CD14-positive monocyte (primary cell): ENCODE measurements at regions of chr21 and their contacts with region 1.

Region 1: GRCh38 chr21:33641336-33642026 is at the start of gene CRYZL1:
- DNase-seq: peak; percentile 99 to 100 (median 100)
- H3K4me3 ChIP-seq: peak within 1 kb of the TSS; percentile 79 to 87 (median 81)
- H3K4me3 Mint-ChIP-seq: peak within 1 kb of the TSS; percentile 94 to 100
- H3K27ac ChIP-seq: peak within 1 kb of the TSS; percentile 70 to 93
- H3K27ac Mint-ChIP-seq: peak within 1 kb of the TSS; percentile 91 to 99 (median 98)
- H3K4me1 ChIP-seq: peaks cover 34 to 45% of the 10 kb centered on the region in 2 donors
- H3K4me1 Mint-ChIP-seq: peaks cover 40% of the 10 kb centered on the region
- H3K27me3 ChIP-seq: peaks cover 0 to 2% of the 10 kb centered on the region in 2 donors
- H3K27me3 Mint-ChIP-seq: peaks cover 0 to 10% (median 0%) of the 10 kb centered on the region in 3 donors
- CTCF ChIP-seq: no peak
- polyA plus RNA-seq, gene CRYZL1: 25.9 to 30.6 (median 26.1) TPM

Region 2: GRCh38 chr21:32278518-32279376 is 1362.7 kb before region 1 on chr21 and contains the start of gene MIS18A:
- intact Hi-C with region 1: loop called in 1 of 2 experiments (anchors 10 kb)
- DNase-seq: peak; percentile 94 to 99 (median 98)
- H3K4me3 ChIP-seq: peak within 1 kb of the TSS; percentile 74 to 94 (median 82)
- H3K4me3 Mint-ChIP-seq: peak within 1 kb of the TSS; percentile 98 to 99
- H3K27ac ChIP-seq: peak within 1 kb of the TSS; percentile 29 to 85
- H3K27ac Mint-ChIP-seq: peak within 1 kb of the TSS; percentile 85 to 95 (median 94)
- H3K4me1 ChIP-seq: peaks cover 16 to 21% of the 10 kb centered on the region in 2 donors
- H3K4me1 Mint-ChIP-seq: peaks cover 23% of the 10 kb centered on the region
- H3K27me3 ChIP-seq: no peaks in the 10 kb centered on the region
- H3K27me3 Mint-ChIP-seq: peaks cover 0 to 1% (median 0%) of the 10 kb centered on the region in 3 donors
- CTCF ChIP-seq: no peak
- polyA plus RNA-seq, gene MIS18A: 1.6 to 2.5 (median 2.3) TPM

Region 3: GRCh38 chr21:32392880-32393676 is 1248.4 kb before region 1 on chr21 and contains the start of gene URB1:
- intact Hi-C with region 1: loop called in 1 of 2 experiments (anchors 5 kb)
- DNase-seq: peak; percentile 85 to 87 (median 86)
- H3K4me3 ChIP-seq: peak within 1 kb of the TSS; percentile 58 to 97 (median 83)
- H3K4me3 Mint-ChIP-seq: peak within 1 kb of the TSS; percentile 90 to 91
- H3K27ac ChIP-seq: peak within 1 kb of the TSS; percentile 85 to 91
- H3K27ac Mint-ChIP-seq: peak within 1 kb of the TSS; percentile 85 to 95 (median 95)
- H3K4me1 ChIP-seq: peaks cover 17 to 21% of the 10 kb centered on the region in 2 donors
- H3K4me1 Mint-ChIP-seq: peaks cover 25% of the 10 kb centered on the region
- H3K27me3 ChIP-seq: no peaks in the 10 kb centered on the region
- H3K27me3 Mint-ChIP-seq: peaks cover 0 to 6% (median 4%) of the 10 kb centered on the region in 3 donors
- CTCF ChIP-seq: no peak
- polyA plus RNA-seq, gene URB1: 0.25 to 2.4 (median 0.47) TPM

Region 4: DNA sequence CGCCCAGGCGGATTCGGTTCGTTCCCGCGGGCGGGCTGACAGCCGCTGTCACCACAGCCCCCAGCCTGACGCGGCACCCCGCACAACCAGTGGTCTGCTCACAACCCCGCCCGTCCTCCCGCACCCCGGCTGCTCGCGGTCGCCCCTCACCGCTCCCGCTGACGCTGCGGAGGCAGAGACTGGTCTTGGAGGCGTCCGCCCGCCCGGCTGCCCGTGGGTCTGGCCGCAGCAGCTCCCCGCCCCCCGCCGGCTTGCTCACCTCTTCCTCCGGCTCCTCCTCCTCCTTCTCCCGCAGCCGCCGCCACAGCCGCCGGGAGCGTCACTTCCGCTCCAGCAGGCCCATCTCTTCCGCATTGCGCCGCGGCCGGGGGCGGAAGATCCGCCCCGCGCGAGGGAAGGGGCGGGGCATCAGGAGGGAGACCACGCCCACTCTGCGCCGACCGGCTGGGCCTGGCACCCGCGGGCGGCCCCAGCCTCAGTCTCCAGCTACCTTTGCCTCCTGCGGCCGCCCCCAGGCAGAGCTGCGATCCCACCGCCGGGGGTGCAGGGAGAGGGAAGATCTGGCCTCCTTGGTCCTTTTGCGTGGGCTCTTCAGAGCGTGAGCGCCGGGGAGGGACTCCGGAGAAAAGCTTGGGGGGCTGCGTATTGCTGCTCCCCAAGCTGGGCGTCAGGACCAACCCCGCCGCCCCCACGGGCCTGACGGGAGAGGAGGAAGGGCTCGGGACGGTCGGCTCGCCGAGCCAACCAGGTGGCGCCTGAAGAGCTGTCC is 913.6 kb before region 1 on chr21 and contains the start of gene SYNJ1:
- intact Hi-C with region 1: loop called in 1 of 2 experiments (anchors 5 kb)
- DNase-seq: peak; percentile 91 to 97 (median 95)
- H3K4me3 ChIP-seq: peak within 1 kb of the TSS; percentile 88 to 99 (median 97)
- H3K4me3 Mint-ChIP-seq: peak within 1 kb of the TSS; percentile 99
- H3K27ac ChIP-seq: peak within 1 kb of the TSS; percentile 92 to 98
- H3K27ac Mint-ChIP-seq: peak within 1 kb of the TSS; percentile 94 to 99 (median 98)
- H3K4me1 ChIP-seq: peaks cover 25 to 27% of the 10 kb centered on the region in 2 donors
- H3K4me1 Mint-ChIP-seq: peaks cover 40% of the 10 kb centered on the region
- H3K27me3 ChIP-seq: no peaks in the 10 kb centered on the region
- H3K27me3 Mint-ChIP-seq: peaks cover 0 to 2% (median 0%) of the 10 kb centered on the region in 3 donors
- CTCF ChIP-seq: no peak
- polyA plus RNA-seq, gene SYNJ1: 4.0 to 16.5 (median 8.1) TPM

Region 5: DNA sequence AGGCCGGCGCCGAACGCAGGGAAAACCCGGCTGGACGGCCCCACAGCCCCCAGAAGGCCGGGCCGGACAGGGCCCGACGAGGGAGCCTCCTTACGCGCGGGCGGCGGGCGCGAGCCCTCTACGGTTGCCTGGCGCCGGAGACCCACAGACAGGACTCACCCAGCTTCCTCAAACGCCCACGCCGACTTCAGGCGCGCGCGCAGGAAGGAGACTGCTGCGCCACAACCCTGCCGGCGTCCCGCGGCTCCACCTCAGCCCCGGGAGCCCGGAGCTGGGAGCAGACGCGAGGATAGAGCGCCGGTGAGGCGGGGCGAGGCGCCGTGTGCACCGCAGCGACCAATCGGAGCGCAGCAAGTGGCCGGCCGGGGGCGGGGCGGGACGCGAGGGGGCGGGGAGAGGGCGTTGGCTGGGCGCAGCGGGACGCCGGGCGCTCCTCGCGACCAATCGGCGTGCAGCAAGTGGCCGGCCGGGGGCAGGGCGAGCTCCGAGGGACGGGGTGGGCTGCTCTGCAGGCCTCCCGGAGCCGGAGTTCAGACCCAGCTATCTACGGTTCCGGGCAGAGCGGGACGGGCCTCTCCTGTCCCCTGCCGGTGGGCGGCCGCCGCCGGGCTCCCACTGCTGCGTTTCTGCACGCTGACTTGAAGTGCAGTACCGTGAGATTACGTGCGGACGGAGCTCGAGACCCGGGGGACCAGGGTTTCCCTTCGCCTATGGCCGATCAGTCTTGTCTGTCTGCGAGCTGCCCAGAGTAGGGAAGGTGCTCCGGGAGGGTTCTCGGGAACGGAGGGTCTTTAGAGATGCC is 161.6 kb before region 1 on chr21 and contains the start of gene TMEM50B:
- intact Hi-C with region 1: loop called in 1 of 2 experiments (anchors 2 kb)
- DNase-seq: peak; percentile 96 to 97 (median 96)
- H3K4me3 ChIP-seq: peak within 1 kb of the TSS; percentile 77 to 97 (median 88)
- H3K4me3 Mint-ChIP-seq: peak within 1 kb of the TSS; percentile 90 to 96
- H3K27ac ChIP-seq: peak within 1 kb of the TSS; percentile 77 to 94
- H3K27ac Mint-ChIP-seq: peak within 1 kb of the TSS; percentile 87 to 97 (median 93)
- H3K4me1 ChIP-seq: peaks cover 21 to 33% of the 10 kb centered on the region in 2 donors
- H3K4me1 Mint-ChIP-seq: peaks cover 24% of the 10 kb centered on the region
- H3K27me3 ChIP-seq: no peaks in the 10 kb centered on the region
- H3K27me3 Mint-ChIP-seq: peaks cover 0 to 1% (median 0%) of the 10 kb centered on the region in 3 donors
- CTCF ChIP-seq: peak; percentile 19
- polyA plus RNA-seq, gene TMEM50B: 33.8 to 43.0 (median 38.2) TPM

Region 6: GRCh38 chr21:33542640-33543504 is 98.6 kb before region 1 on chr21 and contains the start of gene SON:
- intact Hi-C with region 1: loop called (anchors 2 to 10 kb)
- DNase-seq: peak; percentile 97 to 99 (median 98)
- H3K4me3 ChIP-seq: peak within 1 kb of the TSS; percentile 79 to 89 (median 88)
- H3K4me3 Mint-ChIP-seq: peak within 1 kb of the TSS; percentile 84 to 97
- H3K27ac ChIP-seq: peak within 1 kb of the TSS; percentile 98 to 100
- H3K27ac Mint-ChIP-seq: peak within 1 kb of the TSS; percentile 99 to 100 (median 100)
- H3K4me1 ChIP-seq: peaks cover 26 to 38% of the 10 kb centered on the region in 2 donors
- H3K4me1 Mint-ChIP-seq: peaks cover 36% of the 10 kb centered on the region
- H3K27me3 ChIP-seq: no peaks in the 10 kb centered on the region
- H3K27me3 Mint-ChIP-seq: no peaks in the 10 kb centered on the region
- CTCF ChIP-seq: no peak
- polyA plus RNA-seq, gene SON: 66.4 to 269 (median 184) TPM

Region 7: DNA sequence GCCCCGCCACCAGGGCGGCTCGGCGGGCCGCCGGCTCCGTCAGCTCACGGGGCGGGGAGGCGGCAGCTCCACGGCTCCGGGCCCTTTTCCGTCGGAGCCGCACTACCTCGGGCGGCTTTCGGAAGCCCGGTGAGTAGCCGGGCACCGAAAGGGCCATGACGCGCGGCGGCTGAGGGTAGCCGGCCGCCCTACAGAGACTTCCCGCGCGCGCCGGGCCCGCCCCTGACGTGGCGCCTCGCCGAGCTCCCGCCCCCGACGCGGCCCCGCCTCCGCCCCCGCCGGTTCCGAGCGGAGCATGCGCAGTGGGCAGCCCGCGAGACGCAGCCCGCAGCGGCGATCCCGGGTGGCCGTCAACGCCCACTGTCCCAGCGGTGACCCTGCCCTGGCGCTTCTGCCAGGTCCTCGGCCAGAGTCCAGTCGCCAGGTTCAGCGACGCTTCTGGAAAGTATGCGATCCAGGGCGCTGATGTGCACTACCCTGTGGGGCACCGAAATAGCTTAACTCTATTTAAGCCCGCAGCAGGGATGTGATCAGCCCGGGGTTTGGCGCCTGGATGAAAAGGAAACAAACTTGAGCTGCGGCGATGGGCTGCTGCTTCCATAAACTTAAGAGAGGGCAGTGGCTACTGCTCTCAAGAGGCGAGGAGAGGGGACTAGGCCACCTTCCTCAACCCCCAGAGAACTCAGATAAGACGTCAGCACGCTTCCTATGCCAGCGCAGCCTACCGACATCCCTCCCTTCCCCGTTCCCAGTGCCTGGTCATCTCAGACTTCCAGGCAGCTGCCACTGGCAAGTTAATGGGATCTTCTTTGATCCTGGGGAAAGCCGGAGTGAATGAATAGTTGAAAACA is 52.8 kb before region 1 on chr21 and contains the start of gene DONSON:
- intact Hi-C with region 1: loop called in 1 of 2 experiments (anchors 5 kb)
- DNase-seq: peak; percentile 83 to 87 (median 84)
- H3K4me3 ChIP-seq: peak within 1 kb of the TSS; percentile 78 to 85 (median 81)
- H3K4me3 Mint-ChIP-seq: peak within 1 kb of the TSS; percentile 92 to 98
- H3K27ac ChIP-seq: peak within 1 kb of the TSS; percentile 48 to 74
- H3K27ac Mint-ChIP-seq: peak within 1 kb of the TSS; percentile 83 to 92 (median 91)
- H3K4me1 ChIP-seq: peaks cover 10 to 16% of the 10 kb centered on the region in 2 donors
- H3K4me1 Mint-ChIP-seq: peaks cover 18% of the 10 kb centered on the region
- H3K27me3 ChIP-seq: no peaks in the 10 kb centered on the region
- H3K27me3 Mint-ChIP-seq: peaks cover 0 to 2% (median 0%) of the 10 kb centered on the region in 3 donors
- CTCF ChIP-seq: no peak
- polyA plus RNA-seq, gene DONSON: 0.94 to 8.6 (median 1.5) TPM